ENCODE measurements at regions of chr12 and their contacts with region 1.

Region 1: DNA sequence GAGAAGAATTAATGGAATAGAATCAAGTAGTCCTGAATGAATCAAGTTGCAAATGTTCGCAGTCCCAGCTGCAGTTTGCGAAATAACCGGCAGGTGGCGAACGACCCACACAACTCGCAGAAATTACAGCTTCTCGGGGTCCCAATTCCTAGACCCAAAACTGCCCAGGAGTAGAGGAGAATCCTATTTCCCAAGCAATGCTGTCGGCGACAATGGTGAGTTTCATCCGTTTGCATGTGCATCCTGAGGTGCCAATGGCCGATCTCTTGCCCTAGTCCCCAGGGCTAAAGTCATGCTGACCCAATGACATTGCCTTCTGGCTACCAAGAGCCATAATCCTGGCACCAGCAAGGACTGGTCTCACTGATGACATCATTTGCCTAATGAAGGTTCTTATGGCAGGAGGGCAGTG is 8.5 kb upstream of the ASCL1 start:
- DNase-seq: peak in 3 of 6 donors; percentile 55 to 84 (median 64)
- ATAC-seq: peak in 3 of 4 donors; percentile 42 to 55 (median 51)
- H3K4me3 ChIP-seq: no peak overlapping the region
- H3K27ac ChIP-seq: no peak overlapping the region
- H3K4me1 ChIP-seq: no peaks in the 10 kb centered on the region
- H3K27me3 ChIP-seq: no peaks in the 10 kb centered on the region
- CTCF ChIP-seq: peak; percentile 79 to 93 (median 84)

Region 2: DNA sequence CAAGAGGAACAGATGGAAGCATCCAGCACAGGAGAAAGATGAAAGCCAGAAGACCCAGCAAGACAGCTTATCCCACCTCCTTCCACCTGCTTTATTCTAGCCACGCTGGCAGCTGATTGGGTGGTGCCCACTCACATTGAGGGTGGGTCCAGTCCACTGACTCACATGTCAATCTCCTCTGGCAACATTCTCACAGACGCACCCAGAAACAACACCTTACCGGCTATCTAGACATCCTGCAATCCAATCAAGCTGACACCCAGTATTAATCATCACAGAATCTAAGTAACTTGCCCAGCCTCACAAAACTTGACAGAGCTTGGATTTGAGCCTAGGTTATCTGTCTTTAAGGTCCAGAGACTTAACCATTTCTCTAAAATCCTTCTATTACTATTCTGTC is 240.8 kb before region 1 on chr12:
- intact Hi-C with region 1: no loop called
- DNase-seq: no peak
- ATAC-seq: no peak
- H3K4me3 ChIP-seq: no peak overlapping the region
- H3K27ac ChIP-seq: no peak overlapping the region
- H3K4me1 ChIP-seq: no peaks in the 10 kb centered on the region
- H3K27me3 ChIP-seq: no peaks in the 10 kb centered on the region
- CTCF ChIP-seq: no peak

Region 3: GRCh38 chr12:103540319-103540718 is 591.4 kb after region 1 on chr12:
- intact Hi-C with region 1: loop called in 2 of 3 experiments (anchors 5 kb)
- DNase-seq: no peak
- ATAC-seq: no peak
- H3K4me3 ChIP-seq: no peak overlapping the region
- H3K27ac ChIP-seq: no peak overlapping the region
- H3K4me1 ChIP-seq: no peaks in the 10 kb centered on the region
- H3K27me3 ChIP-seq: no peaks in the 10 kb centered on the region
- CTCF ChIP-seq: no peak

Region 4: GRCh38 chr12:103548622-103549601 is 600.0 kb after region 1 on chr12:
- intact Hi-C with region 1: loop called in 2 of 3 experiments (anchors 5 kb)
- DNase-seq: peak in 5 of 6 donors; percentile 24 to 74 (median 42)
- ATAC-seq: peak in 3 of 4 donors; percentile 82 to 85 (median 84)
- H3K4me3 ChIP-seq: no peak overlapping the region
- H3K27ac ChIP-seq: no peak overlapping the region
- H3K4me1 ChIP-seq: no peaks in the 10 kb centered on the region
- H3K27me3 ChIP-seq: no peaks in the 10 kb centered on the region
- CTCF ChIP-seq: peak; percentile 58 to 69 (median 62)